ENCODE measurements at regions of chr17 and their contacts with region 1.

Region 1: DNA sequence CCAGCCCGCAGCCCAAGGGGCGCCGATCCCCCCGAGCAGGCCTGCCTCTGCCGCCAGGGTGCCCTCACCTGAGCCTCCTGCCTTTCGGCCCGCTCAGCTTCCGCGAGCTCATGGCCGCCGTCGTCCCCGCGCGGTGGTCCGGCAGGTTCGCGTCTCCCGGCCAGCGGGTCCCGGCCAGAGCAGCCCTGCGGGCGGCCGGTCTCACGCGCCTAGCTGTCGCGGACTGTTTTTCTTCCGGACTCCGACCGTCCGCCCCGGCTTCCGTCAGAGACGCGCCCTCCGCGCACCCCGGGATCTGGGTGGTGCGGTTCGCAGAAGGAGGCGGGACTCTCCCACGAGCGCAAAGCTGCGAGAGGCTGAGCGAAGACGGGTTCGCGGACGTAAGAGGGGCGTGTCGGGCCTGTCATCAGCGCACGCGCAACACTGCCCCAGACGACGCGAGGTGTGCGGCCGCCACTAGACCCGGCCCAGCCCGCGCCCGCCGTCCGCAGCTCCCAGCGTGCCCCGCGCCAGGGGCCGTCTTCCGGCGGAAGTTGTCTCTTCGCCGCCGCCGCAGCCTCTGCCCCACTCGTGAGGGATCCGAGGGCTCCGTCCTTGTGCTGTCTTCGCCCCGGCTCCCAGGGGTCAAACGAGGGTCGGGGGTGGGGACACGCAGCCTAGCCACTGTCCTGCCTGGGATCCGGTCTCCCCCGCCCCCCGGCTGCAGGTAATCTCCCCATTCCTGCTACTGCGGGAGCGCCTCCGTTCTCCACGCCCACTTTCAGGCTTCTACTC is at the start of gene INPP5K:
- DNase-seq: peak; percentile 98 to 99 (median 99)
- ATAC-seq: peak; percentile 96 to 97
- H3K4me3 ChIP-seq: peak within 1 kb of the TSS; percentile 74
- H3K27ac ChIP-seq: peak within 1 kb of the TSS; percentile 88
- H3K4me1 ChIP-seq: peaks cover 16% of the 10 kb centered on the region
- H3K27me3 ChIP-seq: no peaks in the 10 kb centered on the region
- total RNA-seq, gene INPP5K: 28.7 to 34.7 (median 32.4) TPM

Region 2: GRCh38 chr17:1275962-1276736 is 240.4 kb before region 1 on chr17:
- intact Hi-C with region 1: loop called in 2 of 4 experiments (anchors 5 to 10 kb)
- DNase-seq: peak; percentile 64 to 88 (median 84)
- ATAC-seq: peak; percentile 65 to 72
- H3K4me3 ChIP-seq: no peak overlapping the region
- H3K27ac ChIP-seq: no peak overlapping the region
- H3K4me1 ChIP-seq: no peaks in the 10 kb centered on the region
- H3K27me3 ChIP-seq: no peaks in the 10 kb centered on the region

Region 3: DNA sequence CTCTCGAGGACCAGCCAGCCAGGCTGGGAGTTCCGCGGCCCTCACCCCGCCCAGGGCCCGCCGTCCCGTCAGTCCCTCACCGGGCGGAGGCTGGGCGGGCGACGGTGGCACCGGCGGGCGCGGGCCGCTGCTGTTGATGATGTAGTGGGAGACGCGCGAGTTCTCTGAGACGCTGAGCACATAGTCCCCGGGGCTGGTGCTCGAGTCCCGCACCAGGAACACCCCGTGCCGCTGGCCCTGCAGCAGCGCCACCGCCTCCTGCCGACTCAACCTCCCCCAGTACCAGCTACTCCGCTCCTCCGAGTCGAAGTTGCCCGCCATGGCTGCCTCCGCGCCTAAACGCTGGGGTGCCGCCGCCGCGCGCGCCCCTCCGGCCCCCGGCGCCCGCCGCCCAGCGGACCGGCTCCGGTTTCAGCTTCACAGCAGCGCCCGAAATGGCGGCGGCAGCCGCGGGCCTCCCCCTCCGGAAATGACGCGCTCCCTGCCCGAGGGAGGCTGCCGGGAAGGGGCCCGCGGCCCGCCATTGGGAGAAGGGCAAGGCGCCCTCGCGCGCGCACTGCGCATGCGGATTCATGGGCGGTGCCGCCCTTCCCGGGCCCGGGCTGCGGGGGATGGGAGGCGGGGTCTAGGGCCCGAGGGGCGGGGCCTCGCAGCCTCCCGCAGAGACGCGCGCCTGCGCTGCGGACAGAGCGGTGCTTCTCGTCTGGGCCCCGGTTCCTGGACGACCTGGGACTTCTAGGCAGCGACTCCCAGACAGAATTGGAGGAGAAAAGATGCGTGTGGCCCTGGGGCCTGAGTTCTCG is 60.6 kb before region 1 on chr17 and contains the start of gene CRK:
- intact Hi-C with region 1: loop called in 2 of 4 experiments (anchors 2 to 5 kb)
- DNase-seq: peak; percentile 97 to 99 (median 99)
- ATAC-seq: peak; percentile 91 to 96
- H3K4me3 ChIP-seq: peak within 1 kb of the TSS; percentile 75
- H3K27ac ChIP-seq: peak within 1 kb of the TSS; percentile 94
- H3K4me1 ChIP-seq: peaks cover 8% of the 10 kb centered on the region
- H3K27me3 ChIP-seq: no peaks in the 10 kb centered on the region
- total RNA-seq, gene CRK: 33.9 to 44.8 (median 38.9) TPM

Measured in right cardiac atrium (tissue), 5 donors.